OCI-LY7 (cell line): ENCODE measurements at regions of chr21 and their contacts with region 1.

Region 1: GRCh38 chr21:44932408-44933181 is 7.2 kb upstream of the SLX9 start:
- DNase-seq: peak; percentile 42
- H3K4me3 ChIP-seq: no peak overlapping the region
- H3K27ac ChIP-seq: no peak overlapping the region
- H3K4me1 ChIP-seq: peaks cover 43% of the 10 kb centered on the region
- CTCF ChIP-seq: peak; percentile 57

Region 2: DNA sequence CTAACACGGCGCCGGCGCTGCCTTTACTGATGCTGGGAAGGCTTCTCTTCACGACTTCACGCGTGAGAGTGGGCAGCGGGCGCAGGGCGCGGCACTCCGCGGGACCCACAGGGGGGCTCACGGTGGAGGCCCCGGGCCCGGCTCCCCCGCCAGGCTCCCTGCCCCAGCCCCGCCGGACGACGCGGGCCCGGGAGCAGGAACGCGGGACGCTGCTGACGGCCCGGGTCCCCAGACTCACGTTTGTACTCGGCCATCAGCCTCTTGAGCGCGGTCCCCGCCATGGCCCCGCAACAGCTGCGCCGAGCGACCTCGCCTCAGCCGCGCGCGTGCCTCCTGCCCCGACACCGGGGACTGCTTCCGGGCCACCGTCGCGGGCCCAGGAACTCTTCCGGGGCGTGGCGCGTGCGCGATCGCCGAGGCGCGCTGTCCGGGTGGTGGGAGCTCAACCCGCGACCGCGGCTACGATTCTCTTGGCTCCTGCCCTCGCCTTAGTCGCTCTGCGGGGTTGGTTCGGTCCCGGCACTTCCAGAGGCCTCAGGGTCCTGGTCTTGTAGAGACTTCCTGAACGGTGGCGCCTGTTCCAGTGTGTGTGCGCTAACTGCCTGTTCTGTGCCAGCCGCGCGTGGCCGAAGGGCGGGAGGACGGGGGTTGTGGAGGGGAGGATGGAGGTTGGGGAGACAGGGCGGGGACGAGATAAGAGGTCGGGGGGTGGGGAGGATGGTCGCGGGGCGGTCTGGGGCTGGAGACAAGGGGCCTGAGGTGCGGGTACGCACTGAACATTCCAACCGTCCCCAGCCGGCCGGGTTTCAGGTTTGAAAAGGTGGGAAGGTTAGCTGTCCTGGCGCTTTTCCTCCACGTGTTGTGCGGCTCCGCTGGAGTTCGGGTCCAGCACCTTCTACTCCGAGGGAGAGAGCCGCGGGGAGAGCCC is 130.9 kb before region 1 on chr21 and contains the start of gene UBE2G2:
- CTCF ChIA-PET with region 1: interaction called, 4 read pairs
- POLR2A ChIA-PET with region 1: interaction called, 4 read pairs
- intact Hi-C with region 1: loop called (anchors 1 kb)
- DNase-seq: peak; percentile 86
- H3K4me3 ChIP-seq: peak within 1 kb of the TSS; percentile 81
- H3K27ac ChIP-seq: peak within 1 kb of the TSS; percentile 64
- H3K4me1 ChIP-seq: peaks cover 32% of the 10 kb centered on the region
- CTCF ChIP-seq: no peak
- total RNA-seq, gene UBE2G2: 104 and 121 TPM in 2 replicates

Region 3: DNA sequence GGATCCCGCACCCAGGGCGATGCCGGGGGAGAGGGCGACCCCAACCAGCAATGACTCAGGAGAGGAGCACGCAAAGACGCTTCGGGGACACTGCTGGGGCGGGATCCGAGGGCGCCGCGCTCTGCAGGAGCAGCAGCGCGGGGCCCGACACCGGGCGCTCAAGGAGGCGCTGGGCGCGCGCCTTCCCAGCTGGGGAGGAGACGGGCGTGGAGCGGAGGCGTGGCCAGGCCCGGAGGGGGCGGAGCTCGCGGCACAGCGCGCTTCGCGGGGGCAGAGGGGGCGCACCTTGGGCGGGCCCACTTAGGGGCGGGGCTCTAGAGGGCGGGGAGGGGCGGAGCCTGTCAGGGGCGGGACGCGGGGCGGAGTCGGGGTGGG is 115.1 kb before region 1 on chr21:
- CTCF ChIA-PET with region 1: interaction called, 5 read pairs
- POLR2A ChIA-PET with region 1: no interaction called
- intact Hi-C with region 1: loop called (anchors 5 kb)
- DNase-seq: peak; percentile 85
- H3K4me3 ChIP-seq: peak overlapping the region; percentile 72
- H3K27ac ChIP-seq: peak overlapping the region; percentile 51
- H3K4me1 ChIP-seq: peaks cover 6% of the 10 kb centered on the region
- CTCF ChIP-seq: no peak

Region 4: DNA sequence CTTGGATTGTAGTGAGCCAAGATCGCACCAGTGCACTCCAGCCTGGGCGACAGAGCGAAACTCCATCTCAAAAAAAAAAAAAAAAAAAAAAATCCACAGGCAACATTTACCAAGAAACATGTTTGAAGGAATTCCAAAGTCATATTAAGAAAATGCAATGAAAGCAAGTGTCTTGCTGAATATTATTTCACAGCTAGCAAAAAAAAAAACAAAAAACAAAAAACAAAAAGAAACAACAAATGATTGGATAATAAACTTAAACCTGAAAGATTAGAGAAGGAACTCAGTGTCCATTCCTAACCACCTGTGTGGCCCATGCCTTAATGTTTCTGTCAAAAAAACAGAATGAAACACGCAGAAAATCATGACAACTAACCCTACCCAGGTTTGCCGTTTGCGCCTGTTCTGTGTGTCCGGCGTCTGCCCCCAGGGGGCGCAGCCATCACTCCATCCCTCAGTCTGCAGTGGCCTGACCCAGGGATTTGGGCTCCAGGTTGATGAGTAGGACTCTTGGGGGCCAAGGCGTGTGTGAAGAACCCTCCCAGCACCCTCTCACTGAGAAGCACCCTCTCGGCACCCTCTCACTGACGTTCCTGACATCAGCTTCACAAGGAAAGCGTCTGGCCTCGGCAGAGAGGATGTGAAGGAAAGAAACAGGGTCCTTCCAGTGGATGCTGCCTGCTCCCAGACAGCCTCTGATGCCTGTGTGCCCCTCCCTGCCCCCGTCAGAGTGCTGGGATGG is 39.9 kb before region 1 on chr21:
- CTCF ChIA-PET with region 1: interaction called, 3 read pairs
- POLR2A ChIA-PET with region 1: interaction called, 6 read pairs
- intact Hi-C with region 1: loop called (anchors 1 kb)
- DNase-seq: peak; percentile 72
- H3K4me3 ChIP-seq: no peak overlapping the region
- H3K27ac ChIP-seq: no peak overlapping the region
- H3K4me1 ChIP-seq: no peaks in the 10 kb centered on the region
- CTCF ChIP-seq: peak; percentile 95

Region 5: GRCh38 chr21:44911389-44912157 is 21.0 kb before region 1 on chr21:
- CTCF ChIA-PET with region 1: interaction called, 17 read pairs
- POLR2A ChIA-PET with region 1: interaction called, 9 read pairs
- intact Hi-C with region 1: loop called (anchors 2 kb)
- DNase-seq: peak; percentile 48
- H3K4me3 ChIP-seq: no peak overlapping the region
- H3K27ac ChIP-seq: peak overlapping the region; percentile 23
- H3K4me1 ChIP-seq: peaks cover 39% of the 10 kb centered on the region
- CTCF ChIP-seq: peak; percentile 70

Region 6: DNA sequence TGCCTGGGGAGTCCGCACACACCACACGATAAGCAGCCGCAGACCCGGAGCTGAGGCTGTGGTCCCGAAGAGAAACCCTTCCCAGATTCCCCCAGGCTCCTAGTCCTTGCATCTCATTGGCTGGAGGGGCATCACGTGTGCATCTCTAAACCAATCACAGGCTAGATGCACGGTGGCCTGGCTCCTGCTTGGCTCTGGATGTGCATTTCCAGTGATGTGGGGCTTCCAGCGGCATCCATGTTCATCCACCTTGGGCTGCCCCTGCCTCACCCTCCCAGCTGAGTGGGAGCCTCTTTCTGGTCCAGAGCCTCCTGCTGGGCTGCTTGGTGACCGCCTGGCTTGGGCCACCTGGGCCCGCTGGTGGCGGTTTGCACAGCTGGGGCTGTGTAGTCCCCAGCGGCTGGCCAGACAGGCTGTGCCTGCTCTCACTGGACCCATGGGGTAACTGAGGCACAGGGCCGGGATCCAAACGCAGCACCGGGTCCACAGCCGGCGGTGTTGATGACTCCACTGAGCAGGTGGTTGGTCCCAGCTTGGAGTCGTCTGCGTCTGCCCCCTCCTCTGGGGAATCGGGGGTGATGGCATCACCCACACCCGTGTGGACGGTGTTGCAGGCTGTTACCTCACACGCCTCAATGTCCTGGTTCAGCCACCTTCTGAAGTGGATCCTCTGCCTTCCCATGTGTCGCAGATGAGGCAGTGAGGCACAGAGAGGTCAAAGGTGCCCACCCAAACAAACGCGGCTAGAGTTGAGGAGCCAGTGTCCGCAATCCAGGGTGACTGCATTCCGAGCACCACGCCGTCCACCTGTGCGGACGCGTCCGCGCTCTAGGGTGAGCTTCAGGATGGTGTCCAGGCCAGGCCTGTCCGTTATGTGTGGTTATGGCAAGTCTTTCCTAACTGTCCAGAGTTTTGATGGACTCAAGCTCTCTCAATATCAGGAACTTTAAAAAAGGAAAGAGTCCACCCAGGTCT is 1090.2 kb after region 1 on chr21:
- CTCF ChIA-PET with region 1: no interaction called
- POLR2A ChIA-PET with region 1: no interaction called
- intact Hi-C with region 1: no loop called
- DNase-seq: no peak
- H3K4me3 ChIP-seq: no peak overlapping the region
- H3K27ac ChIP-seq: no peak overlapping the region
- H3K4me1 ChIP-seq: no peaks in the 10 kb centered on the region
- CTCF ChIP-seq: no peak